Left cardiac atrium (tissue), 4 donors: ENCODE measurements at regions of chr14 and their contacts with region 1.

Region 1: DNA sequence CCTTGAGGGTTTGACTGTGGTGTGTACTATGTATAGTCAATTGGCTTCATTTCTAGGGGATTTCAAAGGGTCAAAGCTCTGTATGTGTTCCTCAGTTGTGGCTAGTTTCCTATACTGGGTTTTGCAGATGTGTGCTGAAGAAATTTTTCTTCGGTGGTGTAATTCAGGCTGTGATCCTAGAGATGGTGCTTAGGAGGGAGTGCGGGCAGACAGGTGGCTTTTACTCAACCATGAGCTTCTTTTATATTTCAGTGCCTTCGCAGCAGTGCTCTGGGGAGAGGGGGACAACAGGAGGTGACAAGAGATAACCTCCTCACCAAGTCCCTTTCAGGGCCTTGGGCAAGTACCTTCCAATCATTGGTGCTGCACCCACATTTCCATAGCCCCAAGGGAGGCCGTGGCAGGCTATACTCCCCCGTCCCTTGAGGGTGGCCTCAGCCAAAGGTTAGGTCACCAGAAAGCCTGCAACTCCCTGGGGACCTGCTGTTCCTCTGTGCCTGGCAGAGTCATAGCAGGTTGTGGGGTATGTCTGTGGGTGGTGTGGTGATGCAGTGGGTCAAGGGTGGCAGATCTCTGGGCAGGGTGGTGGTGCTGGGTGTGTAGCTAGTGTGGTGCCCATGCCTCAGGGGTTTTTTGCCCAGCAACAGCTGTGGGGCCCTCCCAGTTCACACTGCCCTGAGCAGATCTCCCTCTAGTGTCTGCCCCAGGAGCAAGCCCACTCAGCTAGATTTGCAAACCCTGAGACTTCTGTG is 37.0 kb upstream of the TMX1 start:
- DNase-seq: no peak
- ATAC-seq: no peak

Region 2: DNA sequence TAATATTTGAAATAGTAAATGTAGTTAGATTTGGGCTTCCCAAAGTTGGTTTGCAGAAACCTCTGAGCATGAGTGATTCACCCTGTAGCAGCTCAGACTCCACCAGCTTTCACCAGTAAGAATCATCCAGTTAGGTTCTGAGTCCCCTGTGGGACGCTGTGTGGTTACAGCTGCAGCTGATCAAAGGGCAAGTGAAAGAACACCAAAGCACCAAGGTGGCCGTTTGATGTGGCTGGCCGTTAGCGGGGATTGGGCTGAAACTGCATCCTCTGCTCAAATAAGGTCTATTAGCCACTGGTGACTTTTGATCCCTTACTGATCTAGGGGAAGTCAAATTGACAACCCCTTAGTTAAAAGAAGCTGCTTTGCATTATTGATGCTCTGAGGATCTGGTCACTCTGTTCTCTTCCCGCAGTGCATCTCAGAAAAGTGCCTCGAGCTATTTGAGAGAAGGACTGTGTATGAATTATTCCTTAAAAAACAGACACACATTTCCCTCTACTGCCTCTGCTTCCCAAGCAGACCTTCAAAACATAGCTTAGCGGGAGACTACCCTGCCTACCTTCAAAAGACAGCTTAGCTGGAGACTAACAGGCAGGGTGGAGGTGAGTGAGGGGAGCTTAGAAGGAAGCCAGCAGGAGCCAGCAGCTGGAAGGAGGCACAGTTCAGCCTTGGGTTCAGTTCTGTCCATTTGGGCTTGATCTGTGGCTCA is 327.6 kb before region 1 on chr14:
- intact Hi-C with region 1: no loop called
- DNase-seq: no peak
- ATAC-seq: no peak

Region 3: GRCh38 chr14:50964595-50965390 is 238.3 kb before region 1 on chr14:
- intact Hi-C with region 1: loop called in 1 of 2 experiments (anchors 10 kb)
- DNase-seq: peak; percentile 49
- ATAC-seq: peak in 1 of 2 donors; percentile 41